Activated CD4-positive, alpha-beta memory T cell treated with anti-CD3 and anti-CD28 coated beads, Interleukin-2, amount 10 ng/mL, durations not matched to agents 7 days and 5 days (primary cell): ENCODE measurements at regions of chr19 and their contacts with region 1.

Region 1: DNA sequence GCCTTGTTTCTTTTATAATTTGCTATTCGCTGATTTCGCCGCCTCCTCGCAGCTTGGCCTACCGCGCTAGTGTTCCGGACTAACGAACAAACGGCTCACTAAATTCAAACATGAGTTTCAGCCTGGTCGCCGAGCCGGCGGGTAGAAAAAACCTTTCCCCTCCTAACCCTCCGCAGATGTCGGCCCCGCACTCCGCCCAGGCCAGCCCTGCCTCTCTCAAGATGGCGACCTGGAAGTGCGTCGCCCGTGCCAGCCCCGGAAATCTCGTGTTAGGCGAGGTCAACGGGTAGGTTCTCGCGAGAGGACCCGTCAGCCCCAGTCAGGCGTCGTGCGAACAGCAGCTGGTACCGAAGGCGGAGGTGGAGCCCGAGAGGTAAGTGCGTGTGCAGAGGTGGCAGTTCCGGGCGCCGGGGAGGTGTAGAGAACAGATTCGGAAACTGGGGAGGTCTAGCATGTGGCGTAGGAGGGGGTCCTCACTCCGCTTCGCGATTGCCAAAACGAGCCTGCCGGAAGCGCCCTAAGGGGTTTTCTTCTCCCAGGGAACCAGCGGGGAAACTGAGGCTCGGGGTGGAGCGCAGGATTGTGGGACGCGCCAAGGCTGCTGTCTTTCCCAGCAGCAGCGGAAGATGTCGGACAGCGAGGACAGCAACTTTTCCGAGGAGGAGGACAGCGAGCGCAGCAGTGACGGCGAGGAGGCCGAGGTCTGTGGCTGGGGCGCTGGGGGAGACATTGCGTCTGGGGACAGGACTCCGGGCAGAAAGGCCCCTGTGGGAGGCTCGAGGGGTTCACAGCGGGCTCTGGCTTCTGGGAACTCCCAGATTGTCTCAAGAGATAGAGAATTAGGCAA is at the start of gene SUPT5H:
- DNase-seq: peak; percentile 99
- H3K4me3 Mint-ChIP-seq: peak within 1 kb of the TSS; percentile 91
- H3K27ac Mint-ChIP-seq: peak within 1 kb of the TSS; percentile 94
- H3K4me1 Mint-ChIP-seq: peaks cover 50% of the 10 kb centered on the region
- H3K27me3 Mint-ChIP-seq: no peaks in the 10 kb centered on the region
- total RNA-seq, gene SUPT5H: 153 to 159 TPM

Region 2: GRCh38 chr19:39390755-39391592 is 54.5 kb before region 1 on chr19 and contains the starts of genes MED29 and PAF1:
- CTCF ChIA-PET with region 1: no interaction called
- POLR2A ChIA-PET with region 1: interaction called, 15 read pairs
- DNase-seq: peak; percentile 97
- H3K4me3 Mint-ChIP-seq: peak within 1 kb of the TSS; percentile 90
- H3K27ac Mint-ChIP-seq: peak within 1 kb of the TSS; percentile 97
- H3K4me1 Mint-ChIP-seq: peaks cover 52% of the 10 kb centered on the region
- H3K27me3 Mint-ChIP-seq: no peaks in the 10 kb centered on the region
- total RNA-seq, gene MED29: 32.3 to 34.5 TPM
- total RNA-seq, gene PAF1: 44.0 to 47.2 TPM

Region 3: GRCh38 chr19:39403331-39404312 is 41.9 kb before region 1 on chr19:
- CTCF ChIA-PET with region 1: interaction called, 3 read pairs
- POLR2A ChIA-PET with region 1: interaction called, 28 read pairs
- DNase-seq: peak; percentile 95
- H3K4me3 Mint-ChIP-seq: peak overlapping the region; percentile 76
- H3K27ac Mint-ChIP-seq: peak overlapping the region; percentile 98
- H3K4me1 Mint-ChIP-seq: peaks cover 65% of the 10 kb centered on the region
- H3K27me3 Mint-ChIP-seq: no peaks in the 10 kb centered on the region

Region 4: GRCh38 chr19:39502640-39503417 is 57.3 kb after region 1 on chr19:
- CTCF ChIA-PET with region 1: interaction called, 14 read pairs
- POLR2A ChIA-PET with region 1: interaction called, 4 read pairs
- DNase-seq: peak; percentile 80
- H3K4me3 Mint-ChIP-seq: no peak overlapping the region
- H3K27ac Mint-ChIP-seq: no peak overlapping the region
- H3K4me1 Mint-ChIP-seq: peaks cover 33% of the 10 kb centered on the region
- H3K27me3 Mint-ChIP-seq: peaks cover 66% of the 10 kb centered on the region

Region 5: GRCh38 chr19:39539519-39540332 is 94.2 kb after region 1 on chr19 and contains the start of gene EID2:
- CTCF ChIA-PET with region 1: interaction called, 61 read pairs
- POLR2A ChIA-PET with region 1: interaction called, 8 read pairs
- DNase-seq: peak; percentile 96
- H3K4me3 Mint-ChIP-seq: peak within 1 kb of the TSS; percentile 94
- H3K27ac Mint-ChIP-seq: peak within 1 kb of the TSS; percentile 89
- H3K4me1 Mint-ChIP-seq: peaks cover 52% of the 10 kb centered on the region
- H3K27me3 Mint-ChIP-seq: no peaks in the 10 kb centered on the region
- total RNA-seq, gene EID2: 14.8 to 15.2 TPM